CD4-positive, alpha-beta memory T cell (primary cell): ENCODE measurements at regions of chr2 and their contacts with region 1.

Region 1: DNA sequence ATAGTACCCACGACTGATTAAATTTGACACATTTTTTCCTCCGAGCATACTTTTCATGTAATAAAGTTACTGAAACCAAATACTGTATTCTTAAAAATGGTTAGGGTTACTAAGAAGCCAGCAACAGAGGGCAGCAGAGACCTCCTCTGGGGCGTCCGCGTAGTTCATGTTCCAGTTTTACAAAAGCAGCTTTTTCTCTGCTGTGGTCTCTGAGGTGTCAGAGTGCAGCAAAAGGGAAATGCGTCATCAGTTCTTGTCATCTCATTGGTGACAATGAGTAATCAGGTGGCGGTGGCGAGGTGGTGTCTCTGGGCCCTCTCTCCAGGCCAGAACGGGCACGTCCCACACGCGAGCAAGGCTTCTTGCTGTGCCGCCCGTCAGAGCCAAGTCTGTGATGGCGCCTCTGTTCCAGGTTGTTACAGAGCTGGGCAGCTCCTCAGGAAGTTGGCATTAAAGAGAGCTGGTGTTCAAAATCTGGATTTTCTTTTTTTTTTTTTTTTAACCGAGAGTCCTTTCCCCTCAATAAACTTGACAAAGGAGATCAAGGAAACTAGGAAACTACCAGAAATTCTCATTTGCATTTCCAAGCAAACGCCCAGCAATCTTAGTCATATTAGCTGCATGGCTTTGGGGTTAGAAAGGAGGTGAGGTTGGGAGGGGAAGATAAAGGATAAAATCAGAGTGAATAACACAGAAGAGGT is 98.6 kb upstream of the BZW1 start:
- DNase-seq: peak; percentile 92 to 98 (median 95)
- H3K4me3 ChIP-seq: peak overlapping the region in 1 of 2 donors; percentile 35
- H3K4me3 Mint-ChIP-seq: peak overlapping the region; percentile 78 to 86 (median 84)
- H3K27ac ChIP-seq: peak overlapping the region; percentile 78
- H3K27ac Mint-ChIP-seq: peak overlapping the region; percentile 98 to 99 (median 98)
- H3K4me1 ChIP-seq: peaks cover 14% of the 10 kb centered on the region
- H3K4me1 Mint-ChIP-seq: peaks cover 8 to 13% (median 11%) of the 10 kb centered on the region in 4 donors
- H3K27me3 ChIP-seq: no peaks in the 10 kb centered on the region
- H3K27me3 Mint-ChIP-seq: no peaks in the 10 kb centered on the region

Region 2: DNA sequence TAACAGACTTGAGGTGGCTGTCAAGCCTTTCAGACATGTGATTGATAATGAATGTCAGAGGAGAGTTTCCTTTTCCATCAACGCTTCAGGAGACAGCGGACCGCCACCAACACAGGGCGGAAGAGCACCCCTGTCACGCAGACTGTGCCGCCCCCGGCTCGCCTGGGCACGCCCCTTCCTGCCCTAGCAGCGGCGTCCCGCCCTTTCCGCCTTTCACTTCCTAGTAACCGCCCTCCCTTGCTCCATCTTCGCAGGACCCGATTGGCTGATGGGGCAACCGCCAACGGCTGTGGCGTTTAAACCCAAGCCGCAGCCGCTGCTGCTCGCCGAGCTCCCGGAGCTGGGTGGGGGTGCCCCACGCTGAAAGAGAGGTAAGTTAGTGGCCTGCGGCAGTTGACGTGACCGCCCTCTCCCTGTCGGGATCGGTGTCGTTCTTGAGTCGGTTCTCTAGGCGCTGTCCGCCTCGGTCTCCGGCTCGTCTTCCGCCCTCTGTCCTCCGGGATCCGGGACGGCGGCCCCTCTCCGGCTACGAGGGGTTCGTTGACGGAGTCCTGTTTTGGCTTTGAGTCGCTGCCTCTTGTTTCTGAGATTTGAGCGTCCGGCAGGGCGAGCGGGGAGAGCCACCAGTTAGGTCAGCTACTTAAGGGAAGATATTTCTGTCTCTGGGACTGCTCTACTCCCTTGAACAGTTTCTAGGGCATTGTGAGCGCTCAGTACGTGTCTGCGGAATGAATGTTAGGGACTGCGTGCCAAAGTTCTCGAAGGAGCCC is 187.1 kb before region 1 on chr2 and contains the start of gene SGO2:
- CTCF ChIA-PET with region 1: interaction called, 3 read pairs
- POLR2A ChIA-PET with region 1: interaction called, 4 read pairs
- intact Hi-C with region 1: loop called (anchors 1 kb)
- DNase-seq: peak; percentile 93 to 97 (median 95)
- H3K4me3 ChIP-seq: peak within 1 kb of the TSS; percentile 82 to 98
- H3K4me3 Mint-ChIP-seq: peak within 1 kb of the TSS; percentile 91 to 97 (median 93)
- H3K27ac ChIP-seq: peak within 1 kb of the TSS; percentile 55
- H3K27ac Mint-ChIP-seq: peak within 1 kb of the TSS; percentile 83 to 93 (median 85)
- H3K4me1 ChIP-seq: peaks cover 14% of the 10 kb centered on the region
- H3K4me1 Mint-ChIP-seq: peaks cover 6 to 15% (median 12%) of the 10 kb centered on the region in 4 donors
- H3K27me3 ChIP-seq: no peaks in the 10 kb centered on the region
- H3K27me3 Mint-ChIP-seq: no peaks in the 10 kb centered on the region
- total RNA-seq, gene SGO2: 4.4 to 4.8 TPM

Region 3: DNA sequence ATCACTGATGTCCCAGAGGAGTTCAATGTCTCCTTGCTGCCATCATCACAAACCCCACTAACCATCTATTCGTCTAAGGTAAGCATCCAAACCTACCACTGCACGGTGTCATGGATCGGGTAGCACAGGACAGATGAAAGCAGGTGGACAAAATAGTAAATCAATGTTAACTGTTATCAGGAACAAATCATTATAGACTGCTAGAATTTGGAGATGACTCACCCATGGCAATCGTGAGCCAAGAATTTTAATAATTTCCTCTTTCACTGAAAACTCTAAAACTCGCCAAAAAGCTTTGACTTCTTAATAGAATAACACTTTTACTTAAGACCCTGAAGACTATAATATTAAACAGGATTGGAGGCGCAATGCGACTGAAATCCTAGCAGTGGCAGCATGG is 64.9 kb after region 1 on chr2:
- CTCF ChIA-PET with region 1: no interaction called
- POLR2A ChIA-PET with region 1: no interaction called
- intact Hi-C with region 1: no loop called
- DNase-seq: no peak
- H3K4me3 ChIP-seq: no peak overlapping the region
- H3K4me3 Mint-ChIP-seq: no peak overlapping the region
- H3K27ac ChIP-seq: no peak overlapping the region
- H3K27ac Mint-ChIP-seq: no peak overlapping the region
- H3K4me1 ChIP-seq: no peaks in the 10 kb centered on the region
- H3K4me1 Mint-ChIP-seq: peaks cover 0 to 1% (median 0%) of the 10 kb centered on the region in 4 donors
- H3K27me3 ChIP-seq: no peaks in the 10 kb centered on the region
- H3K27me3 Mint-ChIP-seq: peaks cover 4 to 6% of the 10 kb centered on the region in 2 donors

Region 4: DNA sequence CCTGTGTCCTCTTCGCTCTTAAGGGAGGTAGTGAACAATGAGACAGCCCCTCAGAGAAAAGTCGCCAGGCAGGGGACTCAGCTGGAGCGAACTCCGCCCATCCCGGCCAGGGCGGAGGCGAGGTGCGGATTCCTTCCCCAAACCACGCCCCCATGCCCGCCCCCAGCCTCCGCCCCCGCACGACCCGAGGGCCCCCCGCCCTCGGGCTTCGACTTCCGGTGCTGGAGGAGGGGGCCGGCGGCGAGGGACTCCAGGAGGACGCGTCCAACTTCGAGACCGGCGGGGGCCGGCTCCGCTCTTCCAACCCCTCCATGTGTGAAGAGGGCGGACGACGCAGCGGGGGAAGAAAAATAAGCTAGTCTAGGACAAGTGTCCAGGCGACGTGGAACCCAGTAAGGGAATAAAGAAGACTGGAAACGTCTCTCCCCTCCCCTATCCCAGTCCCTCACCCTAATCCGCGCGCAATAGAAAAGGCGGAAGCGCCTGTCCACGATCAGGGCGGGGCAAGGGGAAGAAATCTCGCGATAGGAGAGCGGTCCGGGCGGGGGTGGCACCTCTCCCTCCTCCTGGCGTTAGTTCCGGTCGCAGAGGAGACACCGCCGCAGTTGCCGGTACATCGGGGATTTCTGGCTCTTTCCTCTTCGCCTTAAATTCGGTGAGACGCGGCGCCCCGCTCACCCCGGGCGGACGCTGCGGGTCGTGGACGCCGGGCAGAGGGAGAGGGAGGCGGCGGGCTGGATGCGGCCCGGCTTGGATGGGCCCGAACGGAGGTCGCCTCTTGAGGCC is 98.4 kb after region 1 on chr2 and contains the start of gene BZW1:
- CTCF ChIA-PET with region 1: interaction called, 11 read pairs
- POLR2A ChIA-PET with region 1: interaction called, 32 read pairs
- intact Hi-C with region 1: loop called (anchors 1 kb)
- DNase-seq: peak; percentile 97 to 98 (median 98)
- H3K4me3 ChIP-seq: peak within 1 kb of the TSS; percentile 58 to 67
- H3K4me3 Mint-ChIP-seq: peak within 1 kb of the TSS; percentile 95 to 100 (median 98)
- H3K27ac ChIP-seq: peak within 1 kb of the TSS; percentile 97
- H3K27ac Mint-ChIP-seq: peak within 1 kb of the TSS; percentile 96 to 99 (median 98)
- H3K4me1 ChIP-seq: peaks cover 41% of the 10 kb centered on the region
- H3K4me1 Mint-ChIP-seq: peaks cover 35 to 62% (median 43%) of the 10 kb centered on the region in 4 donors
- H3K27me3 ChIP-seq: no peaks in the 10 kb centered on the region
- H3K27me3 Mint-ChIP-seq: no peaks in the 10 kb centered on the region
- total RNA-seq, gene BZW1: 126 to 133 TPM

Region 5: GRCh38 chr2:200901459-200902072 is 188.4 kb after region 1 on chr2:
- CTCF ChIA-PET with region 1: interaction called, 5 read pairs
- POLR2A ChIA-PET with region 1: interaction called, 7 read pairs
- intact Hi-C with region 1: loop called (anchors 1 kb)
- DNase-seq: peak; percentile 76 to 83 (median 79)
- H3K4me3 ChIP-seq: no peak overlapping the region
- H3K4me3 Mint-ChIP-seq: no peak overlapping the region
- H3K27ac ChIP-seq: peak overlapping the region; percentile 1
- H3K27ac Mint-ChIP-seq: peak overlapping the region; percentile 10 to 81 (median 65)
- H3K4me1 ChIP-seq: no peaks in the 10 kb centered on the region
- H3K4me1 Mint-ChIP-seq: peaks cover 6 to 7% (median 6%) of the 10 kb centered on the region in 4 donors
- H3K27me3 ChIP-seq: no peaks in the 10 kb centered on the region
- H3K27me3 Mint-ChIP-seq: no peaks in the 10 kb centered on the region

Region 6: GRCh38 chr2:201057087-201057521 is 344.0 kb after region 1 on chr2:
- CTCF ChIA-PET with region 1: no interaction called
- POLR2A ChIA-PET with region 1: no interaction called
- intact Hi-C with region 1: no loop called
- DNase-seq: no peak
- H3K4me3 ChIP-seq: no peak overlapping the region
- H3K4me3 Mint-ChIP-seq: no peak overlapping the region
- H3K27ac ChIP-seq: no peak overlapping the region
- H3K27ac Mint-ChIP-seq: peak overlapping the region in 4 of 7 donors; percentile 36 to 58 (median 44)
- H3K4me1 ChIP-seq: peaks cover 16% of the 10 kb centered on the region
- H3K4me1 Mint-ChIP-seq: peaks cover 19 to 50% (median 37%) of the 10 kb centered on the region in 4 donors
- H3K27me3 ChIP-seq: no peaks in the 10 kb centered on the region
- H3K27me3 Mint-ChIP-seq: no peaks in the 10 kb centered on the region

Region 7: GRCh38 chr2:201071479-201072200 is 358.5 kb after region 1 on chr2 and contains the starts of genes HYCC2 and NDUFB3:
- CTCF ChIA-PET with region 1: interaction called, 28 read pairs
- POLR2A ChIA-PET with region 1: interaction called, 24 read pairs
- intact Hi-C with region 1: loop called (anchors 1 kb)
- DNase-seq: peak; percentile 95 to 96 (median 95)
- H3K4me3 ChIP-seq: peak within 1 kb of the TSS; percentile 94 to 96
- H3K4me3 Mint-ChIP-seq: peak within 1 kb of the TSS; percentile 91 to 100 (median 98)
- H3K27ac ChIP-seq: peak within 1 kb of the TSS; percentile 79
- H3K27ac Mint-ChIP-seq: peak within 1 kb of the TSS; percentile 94 to 99 (median 98)
- H3K4me1 ChIP-seq: peaks cover 52% of the 10 kb centered on the region
- H3K4me1 Mint-ChIP-seq: peaks cover 35 to 62% (median 46%) of the 10 kb centered on the region in 4 donors
- H3K27me3 ChIP-seq: no peaks in the 10 kb centered on the region
- H3K27me3 Mint-ChIP-seq: peaks cover 0 to 2% of the 10 kb centered on the region in 2 donors
- total RNA-seq, gene HYCC2: 33.1 to 36.4 TPM
- total RNA-seq, gene NDUFB3: 48.7 to 53.6 TPM

Region 8: DNA sequence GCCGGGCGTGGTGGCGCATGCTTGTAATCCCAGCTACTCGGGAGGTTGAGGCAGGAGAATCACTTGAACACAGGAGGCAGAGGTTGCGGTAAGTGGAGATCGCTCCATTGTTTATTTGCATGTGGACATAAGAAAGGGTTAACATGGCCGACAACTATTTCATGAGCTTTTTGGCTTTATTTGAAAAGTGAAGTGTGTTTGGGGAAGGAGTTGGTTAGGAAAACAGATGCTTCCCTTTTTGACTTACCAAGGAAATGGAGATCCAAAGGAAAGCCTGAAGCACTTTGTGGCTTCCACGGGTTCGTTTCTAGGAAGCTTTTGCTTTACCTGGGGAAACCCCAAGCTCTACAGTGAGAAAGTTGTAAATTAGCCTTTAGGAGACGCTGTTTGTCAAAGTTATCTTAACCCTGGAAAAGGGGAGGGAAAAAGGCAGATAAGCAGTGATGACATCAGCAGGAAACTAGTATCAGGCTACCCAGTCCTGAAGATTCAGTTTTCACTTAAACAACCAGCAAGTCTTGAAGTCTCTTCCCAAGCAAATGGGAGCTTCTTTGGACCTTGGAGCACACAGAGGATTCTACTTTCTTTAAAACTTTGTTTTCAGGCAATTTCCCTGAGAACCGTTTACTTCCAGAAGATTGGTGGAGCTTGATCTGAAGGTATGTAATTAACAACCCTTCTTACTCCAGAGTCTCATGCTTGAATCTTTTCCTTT is 469.7 kb after region 1 on chr2 and contains the start of gene CASP10:
- CTCF ChIA-PET with region 1: interaction called, 16 read pairs
- POLR2A ChIA-PET with region 1: interaction called, 4 read pairs
- intact Hi-C with region 1: no loop called
- DNase-seq: peak; percentile 62 to 81 (median 76)
- H3K4me3 ChIP-seq: peak within 1 kb of the TSS; percentile 54 to 87
- H3K4me3 Mint-ChIP-seq: peak within 1 kb of the TSS; percentile 90 to 99 (median 96)
- H3K27ac ChIP-seq: peak within 1 kb of the TSS; percentile 75
- H3K27ac Mint-ChIP-seq: peak within 1 kb of the TSS; percentile 92 to 98 (median 96)
- H3K4me1 ChIP-seq: peaks cover 37% of the 10 kb centered on the region
- H3K4me1 Mint-ChIP-seq: peaks cover 28 to 54% (median 40%) of the 10 kb centered on the region in 4 donors
- H3K27me3 ChIP-seq: no peaks in the 10 kb centered on the region
- H3K27me3 Mint-ChIP-seq: no peaks in the 10 kb centered on the region
- total RNA-seq, gene CASP10: 30.6 to 36.6 TPM

Region 9: DNA sequence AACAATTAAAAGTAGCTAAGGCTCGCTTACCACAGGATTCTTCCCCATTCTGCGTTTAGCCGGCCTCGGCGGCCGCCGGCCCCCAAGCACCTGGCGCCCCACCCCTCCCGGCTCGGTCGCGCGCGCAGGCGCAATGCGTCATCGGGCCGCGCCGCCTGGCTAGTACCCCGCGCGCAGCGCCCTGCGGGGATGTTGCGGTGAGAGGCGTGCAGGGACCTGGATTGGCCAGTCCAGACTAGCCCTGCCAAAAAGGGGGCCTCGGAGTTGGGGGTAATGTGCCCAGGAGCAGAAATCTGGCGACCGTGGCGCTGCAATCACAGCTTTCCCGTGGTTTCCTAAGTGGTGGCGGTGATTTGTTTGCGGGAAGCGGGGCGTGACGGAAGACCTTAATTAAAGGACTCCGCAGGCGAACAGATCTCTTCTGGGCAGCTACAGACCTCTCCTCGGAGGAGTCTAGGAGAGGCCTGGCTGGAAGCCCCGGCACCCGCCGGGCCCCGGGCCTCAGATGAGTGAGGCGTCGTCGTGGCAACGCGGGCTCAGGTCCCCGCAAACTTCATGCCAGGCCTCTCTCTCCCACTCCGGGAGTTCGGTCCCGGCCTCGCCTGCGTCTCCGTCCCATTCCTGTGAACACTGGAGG is 929.5 kb after region 1 on chr2:
- CTCF ChIA-PET with region 1: no interaction called
- POLR2A ChIA-PET with region 1: interaction called, 7 read pairs
- intact Hi-C with region 1: loop called (anchors 2 kb)
- DNase-seq: peak; percentile 83 to 91 (median 89)
- H3K4me3 ChIP-seq: peak overlapping the region; percentile 92 to 97
- H3K4me3 Mint-ChIP-seq: peak overlapping the region; percentile 89 to 99 (median 96)
- H3K27ac ChIP-seq: peak overlapping the region; percentile 83
- H3K27ac Mint-ChIP-seq: peak overlapping the region; percentile 95 to 100 (median 96)
- H3K4me1 ChIP-seq: no peaks in the 10 kb centered on the region
- H3K4me1 Mint-ChIP-seq: peaks cover 7 to 23% (median 7%) of the 10 kb centered on the region in 4 donors
- H3K27me3 ChIP-seq: no peaks in the 10 kb centered on the region
- H3K27me3 Mint-ChIP-seq: no peaks in the 10 kb centered on the region